A673 (cell line): ENCODE measurements at regions of chr1 and their contacts with region 1.

Region 1: GRCh38 chr1:157011845-157012244 is 33.7 kb downstream of the ARHGEF11 start:
- DNase-seq: no peak
- H3K4me3 ChIP-seq: no peak overlapping the region
- H3K27ac ChIP-seq: no peak overlapping the region
- H3K4me1 ChIP-seq: peaks cover 6% of the 10 kb centered on the region
- H3K27me3 ChIP-seq: no peaks in the 10 kb centered on the region
- CTCF ChIP-seq: no peak

Region 2: DNA sequence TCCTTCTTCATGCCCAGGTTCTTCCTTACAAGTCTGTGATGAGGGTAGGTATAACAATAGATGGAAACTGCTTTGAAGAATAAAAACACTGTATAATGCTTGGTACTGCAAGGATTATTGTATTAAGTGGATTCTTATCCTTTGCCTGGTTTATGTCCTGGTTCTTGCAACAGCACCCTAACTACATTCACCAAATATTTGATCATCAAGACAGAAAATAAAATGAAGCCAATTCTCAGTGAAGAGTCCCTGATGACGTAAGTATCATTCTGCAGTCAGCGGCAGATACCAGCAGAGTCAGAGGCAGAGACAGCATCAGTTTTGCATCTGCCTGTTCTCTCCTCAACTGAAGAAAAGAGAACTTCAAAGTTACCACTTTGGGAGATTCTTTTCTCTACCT is 14.0 kb after region 1 on chr1:
- CTCF ChIA-PET with region 1: no interaction called
- POLR2A ChIA-PET with region 1: no interaction called
- intact Hi-C with region 1: no loop called
- DNase-seq: no peak
- H3K4me3 ChIP-seq: no peak overlapping the region
- H3K27ac ChIP-seq: no peak overlapping the region
- H3K4me1 ChIP-seq: no peaks in the 10 kb centered on the region
- H3K27me3 ChIP-seq: no peaks in the 10 kb centered on the region
- CTCF ChIP-seq: no peak

Region 3: DNA sequence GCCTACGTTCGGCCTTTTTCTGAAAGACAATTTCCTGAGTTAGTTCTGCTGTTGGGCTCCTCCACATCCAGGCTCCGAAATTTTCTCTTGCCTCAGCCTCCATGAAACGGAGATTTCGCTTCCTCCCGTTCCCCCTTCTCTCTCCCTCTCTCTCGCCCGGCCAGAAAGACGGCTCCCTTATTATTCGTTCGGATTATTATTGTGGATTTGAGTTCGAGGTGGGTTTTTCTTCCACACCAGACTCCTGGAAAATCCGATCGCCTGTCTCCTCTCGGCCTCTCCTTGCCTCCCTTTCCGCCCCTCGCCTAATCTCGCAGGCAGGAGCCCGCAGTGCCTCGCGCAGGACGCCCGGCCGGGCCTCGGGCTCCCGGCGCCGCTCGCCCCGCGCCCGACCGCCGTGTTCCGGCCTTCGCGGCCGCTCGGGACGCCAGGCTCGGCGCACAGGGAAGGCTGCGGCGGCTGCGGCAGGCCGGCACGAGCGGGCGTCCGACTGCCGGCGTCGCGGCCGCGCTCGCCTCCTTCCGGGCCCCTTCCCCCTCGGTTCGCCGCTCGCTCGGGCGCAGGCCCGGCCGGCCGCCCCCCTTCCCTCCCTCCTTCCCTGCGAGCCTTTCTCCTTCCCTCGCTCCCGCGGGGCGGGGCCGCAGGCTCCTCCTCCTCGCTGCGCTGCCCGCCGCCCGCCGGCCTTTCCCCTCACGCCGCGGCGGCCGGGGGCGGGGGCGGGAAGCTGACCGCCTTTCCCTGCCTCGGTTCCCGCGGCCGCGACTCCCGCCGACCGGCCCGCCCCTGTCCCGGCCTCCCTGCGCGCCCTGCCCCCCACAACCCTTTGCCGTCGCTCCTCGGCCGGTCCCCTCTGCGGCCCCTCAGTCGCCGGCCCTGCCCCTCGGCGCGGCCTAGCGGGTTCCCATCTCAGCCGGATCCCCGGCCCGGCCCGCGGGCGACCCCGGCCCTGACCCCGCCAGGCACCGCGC is 33.7 kb after region 1 on chr1 and contains the start of gene ARHGEF11:
- CTCF ChIA-PET with region 1: no interaction called
- POLR2A ChIA-PET with region 1: interaction called, 16 read pairs
- intact Hi-C with region 1: no loop called
- DNase-seq: peak; percentile 90
- H3K4me3 ChIP-seq: peak within 1 kb of the TSS; percentile 63
- H3K27ac ChIP-seq: peak within 1 kb of the TSS; percentile 90
- H3K4me1 ChIP-seq: peaks cover 16% of the 10 kb centered on the region
- H3K27me3 ChIP-seq: no peaks in the 10 kb centered on the region
- CTCF ChIP-seq: no peak
- total RNA-seq, gene ARHGEF11: 25.3 and 32.3 TPM in 2 replicates